Dendritic cell treated with granulocyte-macrophage colony-stimulating factor and Interleukin-4, amounts not matched to agents 40 ng/mL and 50 ng/mL, for 4 days (primary cell): ENCODE measurements at regions of chr22 and their contacts with region 1.

Region 1: GRCh38 chr22:19447388-19448075 is at the start of gene C22orf39:
- H3K4me3 Mint-ChIP-seq: peak within 1 kb of the TSS; percentile 96
- H3K27ac Mint-ChIP-seq: peak within 1 kb of the TSS; percentile 82
- H3K4me1 Mint-ChIP-seq: peaks cover 41% of the 10 kb centered on the region
- H3K27me3 Mint-ChIP-seq: no peaks in the 10 kb centered on the region

Region 2: DNA sequence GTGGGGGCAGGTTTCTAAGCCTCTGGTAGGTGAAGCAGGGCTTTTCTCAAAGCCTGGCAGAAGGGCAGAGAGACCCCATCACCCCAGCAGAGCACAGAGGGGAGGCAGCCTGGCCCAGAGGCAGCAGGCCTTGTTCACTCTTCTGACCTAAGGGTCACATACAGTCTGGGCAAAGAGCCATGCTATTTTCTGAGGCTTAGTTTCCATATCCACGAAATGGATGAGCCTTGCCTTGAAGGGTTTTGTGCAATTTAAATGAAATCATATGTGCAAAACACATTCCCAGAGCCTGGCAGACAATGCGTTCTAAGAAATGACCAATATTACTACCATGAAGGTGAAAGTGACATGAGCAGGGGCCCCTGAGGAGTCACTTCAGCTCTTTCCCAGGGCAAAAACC is 60.5 kb before region 1 on chr22:
- intact Hi-C with region 1: no loop called
- H3K4me3 Mint-ChIP-seq: no peak overlapping the region
- H3K27ac Mint-ChIP-seq: no peak overlapping the region
- H3K4me1 Mint-ChIP-seq: no peaks in the 10 kb centered on the region
- H3K27me3 Mint-ChIP-seq: no peaks in the 10 kb centered on the region

Region 3: GRCh38 chr22:19432133-19432851 is 15.2 kb before region 1 on chr22 and contains the start of gene MRPL40:
- intact Hi-C with region 1: loop called (anchors 2 kb)
- H3K4me3 Mint-ChIP-seq: peak within 1 kb of the TSS; percentile 85
- H3K27ac Mint-ChIP-seq: peak within 1 kb of the TSS; percentile 97
- H3K4me1 Mint-ChIP-seq: peaks cover 52% of the 10 kb centered on the region
- H3K27me3 Mint-ChIP-seq: no peaks in the 10 kb centered on the region